ENCODE measurements at regions of chr14 and their contacts with region 1.

Region 1: DNA sequence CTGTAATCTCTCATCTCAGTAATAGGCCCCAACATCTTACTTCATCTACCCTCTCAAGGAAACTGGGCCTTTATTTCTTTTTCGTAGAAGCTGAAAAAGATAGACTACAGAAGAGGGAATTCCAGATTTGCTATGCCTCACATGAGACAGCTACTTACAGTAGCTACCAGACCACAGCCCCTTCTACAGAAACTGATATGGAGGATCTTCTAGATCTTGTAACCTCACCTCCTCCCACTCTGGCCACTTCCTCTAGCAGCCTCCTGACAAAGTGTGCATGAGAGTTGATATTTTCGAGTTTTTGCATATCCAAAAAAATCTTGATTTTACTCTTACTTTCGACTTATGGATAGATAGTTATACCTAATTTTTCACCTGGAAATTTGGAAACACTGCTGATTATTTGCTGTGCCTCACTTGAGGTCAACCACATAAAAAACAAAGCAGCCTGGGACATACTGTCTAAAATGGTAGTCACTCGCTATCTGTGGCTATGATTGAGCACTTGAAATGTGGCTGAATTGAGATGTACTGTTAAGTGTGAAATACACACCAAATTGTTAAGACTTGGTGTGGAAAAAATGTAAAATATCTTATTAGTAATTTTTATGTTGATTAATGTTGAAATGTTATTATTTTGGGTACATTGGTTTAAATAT is 86.3 kb upstream of the NID2 start:
- DNase-seq: no peak

Region 2: DNA sequence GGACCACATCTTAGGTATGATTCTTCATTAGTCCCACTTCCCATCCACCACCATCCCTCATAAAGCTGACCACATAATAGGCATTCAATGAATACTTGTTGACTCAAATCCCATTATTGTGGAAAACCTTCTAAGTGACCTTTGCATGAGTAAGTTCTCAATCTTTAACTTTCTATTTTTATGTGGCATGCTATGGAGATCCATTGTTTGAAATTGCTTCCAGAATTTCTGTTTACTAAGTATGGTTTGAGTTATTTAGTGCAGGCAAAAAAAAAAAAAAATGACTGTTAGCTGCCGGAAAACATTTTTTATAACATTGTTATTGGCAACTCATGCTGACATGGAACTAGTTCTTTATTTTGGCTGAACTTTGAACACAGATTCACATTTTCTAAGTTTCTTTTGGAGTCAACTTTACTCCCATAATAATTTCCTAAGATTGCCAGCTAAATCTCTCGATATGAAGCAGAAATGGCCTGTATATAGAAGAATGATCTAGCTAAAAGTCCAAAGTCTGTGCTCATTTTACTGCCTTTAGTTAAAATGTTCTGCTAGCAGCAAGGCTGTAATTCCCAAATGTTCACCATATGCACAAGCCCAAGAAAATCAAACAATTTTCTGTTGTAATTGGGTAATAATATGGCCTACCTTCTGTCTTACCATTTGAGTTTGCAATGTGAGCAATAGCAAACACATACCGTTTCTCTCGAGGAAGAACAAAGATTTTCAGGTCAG is 236.9 kb after region 1 on chr14:
- intact Hi-C with region 1: loop called in 1 of 2 experiments (anchors 5 kb)
- DNase-seq: no peak